ENCODE measurements at regions of chr11 and their contacts with region 1.

Region 1: GRCh38 chr11:73597956-73598718 is at the start of gene FAM168A:
- DNase-seq: peak; percentile 98
- ATAC-seq: peak; percentile 99
- total RNA-seq, gene FAM168A: 25.6 TPM

Region 2: DNA sequence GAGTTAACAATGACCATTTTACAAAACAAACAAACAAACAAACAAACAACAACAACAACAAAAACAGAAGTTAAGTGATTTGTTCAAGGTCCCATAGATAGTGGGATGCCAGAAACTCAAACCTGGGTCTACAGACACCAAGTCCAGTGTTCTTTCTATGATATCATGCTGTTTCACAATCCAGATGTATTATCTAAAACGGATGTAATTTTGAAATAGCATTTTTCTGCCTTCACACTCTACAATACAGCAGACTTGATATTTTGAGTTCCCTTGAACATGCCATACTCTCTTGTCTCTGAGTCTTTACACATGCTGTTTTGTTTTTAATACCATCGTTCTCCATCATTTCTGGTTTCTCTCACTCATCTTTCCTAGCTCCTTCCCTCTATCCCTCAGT is 117.5 kb before region 1 on chr11:
- intact Hi-C with region 1: loop called (anchors 10 kb)
- DNase-seq: no peak
- ATAC-seq: peak; percentile 79

Region 3: GRCh38 chr11:73542175-73542574 is 56.0 kb before region 1 on chr11:
- intact Hi-C with region 1: no loop called
- DNase-seq: no peak
- ATAC-seq: no peak

Measured in Right ventricle myocardium superior (tissue), 1 donor.